ENCODE measurements at regions of chr9 and their contacts with region 1.

Region 1: DNA sequence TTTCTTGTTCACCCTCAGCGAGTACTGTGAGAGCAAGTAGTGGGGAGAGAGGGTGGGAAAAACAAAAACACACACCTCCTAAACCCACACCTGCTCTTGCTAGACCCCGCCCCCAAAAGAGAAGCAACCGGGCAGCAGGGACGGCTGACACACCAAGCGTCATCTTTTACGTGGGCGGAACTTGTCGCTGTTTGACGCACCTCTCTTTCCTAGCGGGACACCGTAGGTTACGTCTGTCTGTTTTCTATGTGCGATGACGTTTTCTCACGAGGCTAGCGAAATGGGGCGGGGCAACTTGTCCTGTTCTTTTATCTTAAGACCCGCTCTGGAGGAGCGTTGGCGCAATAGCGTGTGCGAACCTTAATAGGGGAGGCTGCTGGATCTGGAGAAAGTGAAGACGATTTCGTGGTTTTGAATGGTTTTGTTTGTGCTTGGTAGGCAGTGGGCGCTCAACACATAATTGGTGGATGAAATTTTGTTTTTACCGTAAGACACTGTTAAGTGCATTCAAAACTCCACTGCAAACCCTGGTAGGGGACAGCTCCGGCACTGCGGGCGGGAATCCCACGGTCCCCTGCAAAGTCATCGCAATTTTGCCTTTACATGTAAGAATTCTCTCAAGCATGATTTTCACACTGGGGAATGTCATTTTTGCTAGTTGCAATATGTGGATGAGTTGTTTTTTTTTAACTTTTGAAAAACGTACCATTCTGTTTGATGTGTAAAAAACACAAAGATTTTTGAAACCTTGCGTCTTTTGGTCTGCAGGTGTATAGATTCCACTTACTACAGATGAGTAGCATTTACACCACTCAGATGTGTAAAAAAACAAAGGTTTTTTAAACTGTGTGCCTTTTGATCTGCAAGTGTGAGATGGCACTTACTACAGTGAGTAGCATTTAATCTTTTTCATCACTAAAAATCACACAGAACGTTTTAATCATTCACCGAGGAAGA is 631 bp upstream of the C9orf72 start:
- DNase-seq: peak; percentile 99
- H3K4me3 ChIP-seq: peak overlapping the region; percentile 75 to 93 (median 80)
- H3K27ac ChIP-seq: peak overlapping the region; percentile 96 to 100 (median 98)
- H3K4me1 ChIP-seq: peaks cover 3 to 32% (median 16%) of the 10 kb centered on the region in 4 donors
- H3K27me3 ChIP-seq: no peaks in the 10 kb centered on the region
- CTCF ChIP-seq: peak in 1 of 4 experiments; percentile 15
- EP300 ChIP-seq: peak; percentile 95 to 99 (median 97)
- POLR2A ChIP-seq: peak; percentile 76 to 81

Region 2: DNA sequence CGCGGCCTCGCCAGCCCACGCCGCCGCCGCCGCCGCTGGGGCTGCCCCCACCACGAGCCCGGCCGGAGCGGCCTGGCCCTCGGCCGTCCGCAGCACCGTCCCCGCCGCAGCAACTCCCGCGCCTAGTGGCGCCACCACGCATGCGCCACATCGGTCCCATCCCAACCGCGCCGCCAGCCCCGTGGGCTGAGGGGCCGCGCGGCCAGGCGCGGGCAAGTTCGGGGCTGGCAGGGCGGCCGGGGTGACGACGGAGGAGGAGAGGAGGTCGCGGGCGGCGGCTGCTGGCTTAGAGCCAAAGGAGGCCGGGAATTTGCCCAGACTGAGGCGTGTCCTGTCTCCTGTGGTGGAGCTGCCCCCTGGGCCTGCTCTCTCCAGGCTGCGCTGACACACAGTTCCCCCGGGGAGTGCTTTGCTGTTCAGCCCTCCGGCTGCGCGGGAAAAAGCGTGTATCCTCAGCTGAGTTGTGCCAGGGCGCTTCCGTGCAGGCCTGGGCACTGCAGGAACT is 1895.7 kb before region 1 on chr9 and contains the start of gene TUSC1:
- intact Hi-C with region 1: loop called (anchors 10 kb)
- DNase-seq: peak; percentile 93
- H3K4me3 ChIP-seq: peak within 1 kb of the TSS; percentile 63 to 89 (median 78)
- H3K27ac ChIP-seq: peak within 1 kb of the TSS; percentile 91 to 98 (median 96)
- H3K4me1 ChIP-seq: peaks cover 0 to 21% (median 13%) of the 10 kb centered on the region in 4 donors
- H3K27me3 ChIP-seq: no peaks in the 10 kb centered on the region
- CTCF ChIP-seq: peak in 3 of 4 experiments; percentile 10 to 29 (median 27)
- EP300 ChIP-seq: peak in 1 of 4 donors; percentile 66
- POLR2A ChIP-seq: no peak
- total RNA-seq, gene TUSC1: 17.7 to 25.5 (median 21.3) TPM

Region 3: DNA sequence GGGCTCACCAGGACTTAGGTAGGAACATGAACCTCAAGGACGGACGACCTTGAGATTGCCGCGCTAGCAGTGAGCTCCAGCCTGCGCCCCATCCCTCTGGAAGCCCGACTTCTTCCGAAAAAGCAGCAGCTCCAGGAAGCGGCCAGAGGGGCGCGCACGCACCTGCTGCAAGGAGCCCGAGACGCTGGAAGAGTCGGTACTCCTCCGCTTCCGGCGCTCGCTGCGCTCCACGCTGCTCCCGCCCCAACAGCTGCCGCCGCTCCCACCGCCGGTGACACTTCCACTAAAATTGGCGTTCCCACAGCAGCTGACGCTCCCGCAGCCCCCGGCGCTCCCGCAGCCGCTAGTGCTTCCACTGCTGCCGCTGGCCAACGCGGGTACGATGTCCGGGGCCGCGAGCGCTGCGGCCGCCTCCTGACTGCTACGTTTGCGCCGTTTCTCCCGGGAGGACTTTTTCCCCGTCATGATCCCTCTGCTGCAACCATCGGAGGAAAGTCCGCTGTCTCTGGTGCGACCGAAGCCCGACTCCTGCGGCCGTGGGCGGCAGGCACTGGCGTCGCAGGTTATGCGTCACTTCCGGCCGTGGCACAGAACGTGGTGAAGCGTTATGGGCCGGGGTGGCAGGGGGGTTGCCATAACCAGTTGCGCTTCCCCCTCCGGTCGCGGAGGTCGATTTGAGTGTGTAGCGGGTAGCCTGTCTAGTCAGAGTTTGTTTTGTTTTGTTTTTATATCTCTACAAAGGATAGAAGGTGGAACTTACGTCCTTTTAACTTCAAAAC is 681.5 kb before region 1 on chr9 and contains the start of gene CAAP1:
- intact Hi-C with region 1: loop called (anchors 5 kb)
- DNase-seq: peak; percentile 96
- H3K4me3 ChIP-seq: peak within 1 kb of the TSS; percentile 72 to 99 (median 92)
- H3K27ac ChIP-seq: peak within 1 kb of the TSS; percentile 92 to 100 (median 98)
- H3K4me1 ChIP-seq: peaks cover 0 to 25% (median 22%) of the 10 kb centered on the region in 4 donors
- H3K27me3 ChIP-seq: no peaks in the 10 kb centered on the region
- CTCF ChIP-seq: peak in 3 of 4 experiments; percentile 15 to 46 (median 27)
- EP300 ChIP-seq: peak in 1 of 4 donors; percentile 35
- POLR2A ChIP-seq: peak; percentile 65 to 69
- total RNA-seq, gene CAAP1: 10.2 to 18.2 (median 11.5) TPM

Region 4: DNA sequence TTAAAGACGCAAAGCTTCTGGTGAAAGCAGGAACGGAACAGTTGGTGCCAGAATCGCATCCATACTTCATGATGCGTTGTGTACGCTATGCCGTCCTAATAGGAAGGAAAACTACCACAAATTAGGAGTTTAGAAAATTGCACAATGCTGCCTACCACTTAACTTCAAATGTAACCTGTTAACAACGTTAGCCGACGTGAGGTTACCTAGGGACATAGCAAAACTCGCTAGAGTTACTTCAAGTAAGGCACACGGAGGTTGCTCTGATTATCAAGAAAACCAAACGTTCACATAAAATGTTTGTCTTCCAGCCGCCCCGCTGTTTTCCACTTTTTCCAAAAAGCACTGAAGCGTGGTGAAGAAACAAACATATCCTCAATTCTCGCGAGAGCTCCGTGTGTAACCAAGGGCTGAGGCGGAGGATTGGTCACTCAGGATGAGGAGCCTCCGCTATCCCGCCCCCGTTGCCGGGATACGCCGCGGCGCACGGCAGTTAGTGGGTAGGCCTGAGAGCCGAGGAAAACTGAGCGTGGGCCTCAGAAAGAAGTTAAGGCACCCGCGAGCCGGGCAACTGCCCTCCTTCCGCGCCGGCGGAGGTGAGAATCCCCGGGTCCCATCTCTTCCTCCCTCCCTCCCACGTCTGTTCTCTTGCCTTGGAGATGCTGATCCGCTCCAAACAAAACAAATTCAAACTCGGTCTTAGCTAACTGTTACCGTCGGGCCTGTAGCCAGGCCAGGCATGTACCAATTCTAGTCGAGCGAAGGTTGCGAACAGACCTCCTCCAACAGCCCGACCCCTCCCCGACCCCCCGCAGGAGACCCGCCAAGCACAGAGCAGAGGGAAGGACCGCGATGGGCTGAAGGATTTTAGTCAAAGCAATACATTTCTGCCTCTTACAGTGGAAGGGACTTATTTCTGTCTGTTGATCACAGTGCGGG is 617.7 kb before region 1 on chr9 and contains the start of gene IFT74:
- intact Hi-C with region 1: loop called (anchors 10 kb)
- DNase-seq: peak; percentile 99
- H3K4me3 ChIP-seq: peak within 1 kb of the TSS; percentile 56 to 61 (median 59)
- H3K27ac ChIP-seq: peak within 1 kb of the TSS; percentile 83 to 90 (median 88)
- H3K4me1 ChIP-seq: peaks cover 0 to 14% (median 9%) of the 10 kb centered on the region in 4 donors
- H3K27me3 ChIP-seq: no peaks in the 10 kb centered on the region
- CTCF ChIP-seq: no peak
- EP300 ChIP-seq: no peak
- POLR2A ChIP-seq: peak; percentile 36 to 53
- total RNA-seq, gene IFT74: 14.1 to 22.5 (median 18.2) TPM

Region 5: DNA sequence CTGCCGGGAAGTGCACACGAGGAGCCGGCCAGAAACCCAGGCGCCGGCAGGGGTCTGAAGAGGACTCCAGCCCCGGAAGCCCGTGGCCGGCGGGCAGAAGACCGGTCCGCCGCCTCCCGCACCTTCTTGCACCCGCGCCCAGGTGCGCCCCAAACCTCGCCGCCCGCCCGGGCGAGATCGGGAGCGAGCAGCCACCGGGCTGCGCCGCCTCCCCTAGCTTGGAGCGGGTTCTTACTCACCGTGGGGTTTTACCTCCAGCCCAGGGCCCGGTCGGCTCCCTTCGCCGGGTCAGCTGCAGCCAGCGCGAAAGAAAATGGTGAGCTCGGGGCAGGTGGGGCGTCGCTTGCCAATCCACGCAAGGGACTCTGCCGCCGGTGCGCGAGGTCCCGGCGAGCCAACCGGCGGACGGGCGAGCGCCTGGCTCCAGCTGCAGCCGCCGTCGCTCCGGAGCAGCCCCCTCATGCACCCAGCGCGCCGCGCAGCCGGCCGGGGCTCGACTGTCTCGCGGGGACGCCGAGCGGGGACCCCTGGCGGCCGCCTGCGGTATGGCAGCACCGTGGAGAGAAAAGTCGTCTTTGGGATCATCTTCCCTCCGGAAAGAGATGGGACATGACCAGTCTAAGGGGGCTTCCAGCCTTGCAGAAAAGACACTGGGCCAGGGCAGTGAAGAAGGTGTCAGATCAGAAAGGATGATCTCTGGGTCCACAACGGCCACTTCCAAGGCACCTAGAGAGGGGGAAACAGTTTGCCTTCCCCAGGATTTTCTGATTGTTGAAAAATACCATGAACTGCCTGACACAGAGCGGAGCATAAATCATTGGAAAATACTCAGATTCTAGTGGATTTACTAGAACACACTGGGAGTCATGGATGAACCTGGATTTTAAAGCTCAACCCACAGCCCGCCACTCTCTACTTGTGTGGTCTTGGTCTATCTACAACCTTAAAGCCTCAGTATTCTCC is 44.3 kb before region 1 on chr9 and contains the start of gene MOB3B:
- intact Hi-C with region 1: loop called (anchors 2 kb)
- DNase-seq: peak; percentile 91
- H3K4me3 ChIP-seq: peak within 1 kb of the TSS; percentile 65 to 74 (median 68)
- H3K27ac ChIP-seq: peak within 1 kb of the TSS; percentile 84 to 97 (median 94)
- H3K4me1 ChIP-seq: peaks cover 0 to 47% (median 34%) of the 10 kb centered on the region in 4 donors
- H3K27me3 ChIP-seq: no peaks in the 10 kb centered on the region
- CTCF ChIP-seq: peak; percentile 58 to 95 (median 80)
- EP300 ChIP-seq: no peak
- POLR2A ChIP-seq: no peak
- total RNA-seq, gene MOB3B: 6.9 to 19.7 (median 10.4) TPM

Region 6: DNA sequence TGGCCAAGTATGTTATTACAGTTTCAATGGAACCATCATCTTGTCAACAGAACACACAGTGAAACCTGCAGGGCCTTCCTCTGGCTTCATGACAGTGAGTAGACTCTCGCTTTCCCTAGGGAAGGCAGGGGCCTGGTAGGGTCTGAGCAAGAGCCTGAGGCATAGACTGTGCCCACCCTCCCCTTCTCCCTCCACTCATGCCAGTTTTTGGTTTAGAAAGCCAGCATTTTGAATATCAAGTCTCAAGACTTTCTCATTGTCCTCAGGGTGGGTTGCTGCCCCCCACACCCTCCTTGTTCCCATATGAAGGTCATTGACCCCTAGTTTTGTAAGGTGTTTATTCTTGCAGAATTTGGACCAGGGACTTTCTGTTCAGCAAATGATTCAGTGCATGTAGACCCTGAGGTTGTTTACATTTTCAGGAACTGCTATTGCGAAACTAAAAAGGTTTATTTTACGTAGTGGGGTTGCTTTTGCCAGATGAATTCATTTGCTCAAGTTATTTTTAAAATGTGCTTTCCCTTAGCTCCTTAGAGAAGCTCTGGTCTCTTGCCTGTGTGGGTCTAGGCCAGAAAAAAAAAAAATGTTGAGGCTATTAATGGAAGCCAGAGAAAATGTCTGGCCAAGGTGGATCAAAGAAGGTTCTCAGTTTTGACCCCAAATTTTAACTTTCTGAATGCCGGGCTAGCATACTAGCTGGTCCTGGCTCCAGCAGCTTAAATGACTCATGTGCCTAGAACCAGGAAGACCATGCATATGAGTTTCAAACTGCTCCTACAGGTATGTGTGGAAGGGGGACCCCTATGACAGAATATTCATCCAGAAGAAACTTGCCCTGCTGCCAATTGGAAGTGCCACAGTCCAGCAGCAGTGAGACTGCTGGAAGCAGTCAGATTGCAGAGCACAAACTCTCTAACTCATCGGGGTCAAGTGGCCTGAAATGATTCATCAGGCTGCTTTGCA is 34.2 kb before region 1 on chr9:
- intact Hi-C with region 1: loop called (anchors 2 kb)
- DNase-seq: peak; percentile 83
- H3K4me3 ChIP-seq: no peak overlapping the region
- H3K27ac ChIP-seq: peak overlapping the region; percentile 74 to 89 (median 86)
- H3K4me1 ChIP-seq: peaks cover 0 to 66% (median 51%) of the 10 kb centered on the region in 4 donors
- H3K27me3 ChIP-seq: no peaks in the 10 kb centered on the region
- CTCF ChIP-seq: no peak
- EP300 ChIP-seq: peak; percentile 95 to 99 (median 96)
- POLR2A ChIP-seq: no peak

Region 7: GRCh38 chr9:27602142-27602861 is 28.4 kb after region 1 on chr9:
- intact Hi-C with region 1: loop called (anchors 1 kb)
- DNase-seq: no peak
- H3K4me3 ChIP-seq: peak overlapping the region in 2 of 4 donors; percentile 2 to 15
- H3K27ac ChIP-seq: peak overlapping the region in 3 of 4 donors; percentile 64 to 75 (median 70)
- H3K4me1 ChIP-seq: peaks cover 0 to 33% (median 29%) of the 10 kb centered on the region in 4 donors
- H3K27me3 ChIP-seq: no peaks in the 10 kb centered on the region
- CTCF ChIP-seq: no peak
- EP300 ChIP-seq: no peak
- POLR2A ChIP-seq: no peak